ENCODE measurements at regions of chr6 and their contacts with region 1.

Region 1: GRCh38 chr6:144095331-144096002 is at the start of gene SF3B5:
- DNase-seq: peak; percentile 97
- H3K4me3 Mint-ChIP-seq: peak within 1 kb of the TSS; percentile 93
- H3K27ac Mint-ChIP-seq: peak within 1 kb of the TSS; percentile 92
- H3K4me1 Mint-ChIP-seq: peaks cover 21% of the 10 kb centered on the region
- H3K27me3 Mint-ChIP-seq: no peaks in the 10 kb centered on the region
- total RNA-seq, gene SF3B5: 207 and 208 TPM in 2 replicates

Region 2: DNA sequence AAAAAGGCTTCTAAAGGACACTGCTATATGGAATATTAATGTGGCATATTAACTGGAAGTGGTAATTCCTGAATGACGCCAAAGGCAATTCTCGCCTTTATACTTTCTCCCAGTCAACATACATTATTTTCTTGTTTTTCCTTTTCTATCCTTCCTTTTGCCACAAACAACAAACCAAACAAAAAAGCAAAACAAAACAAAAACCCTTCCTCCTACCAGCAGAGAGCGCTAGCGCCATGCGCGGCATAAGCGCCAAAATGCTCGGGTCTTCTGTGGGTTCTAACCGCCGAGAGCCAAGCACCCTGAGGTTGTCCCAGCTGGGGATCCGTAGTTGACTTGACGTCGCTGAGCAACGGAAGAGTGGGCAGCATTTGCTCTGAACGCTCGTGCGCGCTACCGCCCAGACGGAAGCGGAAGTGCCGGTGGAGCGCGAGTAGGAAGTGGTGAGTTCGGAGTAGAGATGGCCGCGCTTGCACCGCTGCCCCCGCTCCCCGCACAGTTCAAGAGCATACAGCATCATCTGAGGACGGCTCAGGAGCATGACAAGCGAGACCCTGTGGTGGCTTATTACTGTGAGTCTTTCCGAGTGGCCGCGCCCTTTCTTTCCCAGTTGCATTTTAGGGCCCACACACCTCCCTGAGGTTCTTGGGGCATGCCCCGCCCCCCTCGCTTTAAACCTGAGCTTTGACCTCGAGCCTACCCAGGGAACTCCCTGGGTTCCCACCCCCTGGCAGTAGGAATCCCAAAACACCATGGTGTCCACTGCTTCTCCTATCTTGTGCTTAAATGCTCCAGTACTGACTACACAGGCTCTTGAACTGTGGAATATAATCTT is 1948.4 kb before region 1 on chr6 and contains the starts of genes NMBR and VTA1:
- intact Hi-C with region 1: loop called (anchors 10 kb)
- DNase-seq: peak; percentile 95
- H3K4me3 Mint-ChIP-seq: peak within 1 kb of the TSS; percentile 91
- H3K27ac Mint-ChIP-seq: peak within 1 kb of the TSS; percentile 59
- H3K4me1 Mint-ChIP-seq: peaks cover 31% of the 10 kb centered on the region
- H3K27me3 Mint-ChIP-seq: no peaks in the 10 kb centered on the region
- total RNA-seq, gene NMBR: not detected in 2 replicates
- total RNA-seq, gene VTA1: 49.5 and 49.9 TPM in 2 replicates

Region 3: DNA sequence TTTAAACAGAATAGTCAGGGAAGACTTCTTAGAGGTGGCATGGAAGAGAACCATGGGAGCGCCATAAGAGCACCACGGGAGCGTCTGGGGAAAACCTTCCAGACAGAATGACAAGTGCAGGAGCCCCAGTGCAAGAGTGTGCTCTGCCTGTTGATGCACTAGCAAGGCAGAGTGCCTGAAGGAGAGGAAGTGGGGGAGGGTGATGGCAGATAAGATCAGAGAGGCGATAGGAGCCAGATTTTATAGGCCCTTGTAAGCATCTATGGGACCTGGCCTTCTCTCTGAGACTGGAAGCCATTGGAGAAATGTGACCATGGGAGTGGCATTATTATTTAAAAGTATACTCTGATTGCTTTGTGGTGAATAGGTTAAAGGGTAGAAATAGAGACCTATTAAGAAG is 597.0 kb before region 1 on chr6:
- intact Hi-C with region 1: no loop called
- DNase-seq: no peak
- H3K4me3 Mint-ChIP-seq: no peak overlapping the region
- H3K27ac Mint-ChIP-seq: no peak overlapping the region
- H3K4me1 Mint-ChIP-seq: peaks cover 16% of the 10 kb centered on the region
- H3K27me3 Mint-ChIP-seq: no peaks in the 10 kb centered on the region

Region 4: DNA sequence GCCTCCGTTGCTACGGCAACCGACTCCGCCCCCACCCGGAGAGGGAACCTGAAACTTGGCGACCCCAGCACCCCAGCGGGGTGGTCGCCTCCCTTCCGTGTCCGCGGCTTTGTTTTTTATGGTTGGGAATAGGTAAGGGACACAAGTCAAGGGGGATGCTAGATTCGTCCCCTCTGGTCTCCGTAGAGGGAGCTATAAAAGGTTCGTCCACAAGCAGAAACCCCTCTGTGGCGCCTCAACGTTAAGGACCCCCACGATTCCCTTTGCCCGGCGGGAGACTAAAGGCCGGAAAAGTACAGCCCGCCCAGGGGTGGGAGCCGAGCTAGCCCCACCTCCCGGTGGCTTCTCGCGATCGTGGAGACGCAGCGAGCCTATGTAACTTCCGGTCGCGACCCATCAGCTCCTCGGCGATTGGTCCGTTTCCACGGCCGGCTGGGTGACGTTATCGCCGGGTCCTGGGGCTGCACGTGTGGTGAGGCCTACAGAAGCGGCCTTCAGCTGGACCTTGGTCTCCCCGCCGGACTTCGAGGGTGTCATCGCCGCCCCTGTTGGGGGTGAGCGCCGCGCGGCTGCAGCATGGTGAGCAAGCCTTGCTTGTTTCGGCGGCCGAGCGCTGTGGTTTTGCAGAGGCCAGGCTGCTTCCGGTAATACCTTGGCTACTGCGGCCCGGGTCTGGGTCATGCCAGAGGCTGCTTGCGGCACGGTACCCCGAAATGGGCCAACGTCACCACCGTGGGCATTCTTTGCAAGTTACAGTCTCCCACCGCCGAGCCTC is 252.4 kb before region 1 on chr6 and contains the start of gene LTV1:
- intact Hi-C with region 1: loop called (anchors 1 kb)
- DNase-seq: peak; percentile 90
- H3K4me3 Mint-ChIP-seq: peak within 1 kb of the TSS; percentile 97
- H3K27ac Mint-ChIP-seq: peak within 1 kb of the TSS; percentile 96
- H3K4me1 Mint-ChIP-seq: peaks cover 17% of the 10 kb centered on the region
- H3K27me3 Mint-ChIP-seq: no peaks in the 10 kb centered on the region
- total RNA-seq, gene LTV1: 41.2 and 44.7 TPM in 2 replicates

Region 5: DNA sequence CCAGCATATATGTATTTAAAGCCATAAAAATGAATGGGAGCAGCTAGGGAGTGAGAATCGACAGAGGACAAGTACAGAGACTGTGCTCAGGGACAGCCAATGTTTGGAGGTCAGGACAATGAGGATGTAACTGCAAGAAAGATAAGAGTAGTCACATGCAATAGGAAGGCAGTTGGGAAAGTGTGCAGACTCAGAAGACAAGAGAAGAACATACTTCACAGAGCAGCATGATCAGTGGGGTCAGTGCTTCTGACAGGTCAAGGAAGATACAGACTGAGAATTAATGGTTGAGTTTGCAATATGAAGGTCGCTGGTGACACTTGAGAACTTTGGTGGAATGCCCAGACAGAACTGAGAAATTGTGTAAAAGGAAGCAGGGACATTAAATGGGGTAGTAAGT is 112.5 kb before region 1 on chr6:
- intact Hi-C with region 1: no loop called
- DNase-seq: no peak
- H3K4me3 Mint-ChIP-seq: no peak overlapping the region
- H3K27ac Mint-ChIP-seq: no peak overlapping the region
- H3K4me1 Mint-ChIP-seq: no peaks in the 10 kb centered on the region
- H3K27me3 Mint-ChIP-seq: peaks cover 6% of the 10 kb centered on the region

Region 6: GRCh38 chr6:144063744-144064401 is 31.6 kb before region 1 on chr6:
- intact Hi-C with region 1: loop called (anchors 1 kb)
- DNase-seq: peak; percentile 89
- H3K4me3 Mint-ChIP-seq: peak overlapping the region; percentile 87
- H3K27ac Mint-ChIP-seq: peak overlapping the region; percentile 89
- H3K4me1 Mint-ChIP-seq: peaks cover 43% of the 10 kb centered on the region
- H3K27me3 Mint-ChIP-seq: no peaks in the 10 kb centered on the region

Region 7: DNA sequence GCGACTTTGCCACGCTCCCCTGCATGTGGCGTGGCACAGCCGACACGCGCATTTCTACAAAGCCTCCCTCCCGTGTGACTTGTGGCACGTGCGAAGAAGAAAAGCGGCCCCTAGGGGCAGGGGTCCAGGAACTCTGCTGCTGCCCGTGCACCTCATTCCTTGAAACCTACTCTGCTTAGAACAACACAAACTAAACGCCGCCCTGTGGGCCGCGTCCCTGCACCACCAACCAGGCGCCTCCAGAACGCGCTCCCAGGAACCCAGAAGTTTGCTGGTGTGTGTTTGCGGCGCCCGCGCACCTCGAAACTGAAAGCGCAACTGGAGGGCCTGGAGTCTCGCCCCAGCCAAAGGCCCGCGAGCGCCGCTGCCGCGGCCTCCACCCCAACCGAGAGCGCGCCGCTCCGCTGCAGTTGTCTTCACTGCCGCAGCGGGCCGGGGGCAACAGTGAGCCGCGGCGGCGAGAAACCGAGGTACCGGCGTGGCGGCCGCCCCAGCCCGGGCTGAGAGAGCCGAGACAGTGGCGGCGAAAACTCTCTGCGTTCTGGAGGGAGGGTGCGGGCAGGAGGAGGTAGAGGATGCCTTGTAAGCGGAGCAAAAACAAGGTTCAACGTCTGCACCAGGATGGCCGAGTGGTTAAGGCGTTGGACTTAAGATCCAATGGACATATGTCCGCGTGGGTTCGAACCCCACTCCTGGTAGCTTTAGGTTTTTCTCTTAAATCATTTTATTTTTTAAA is 120.6 kb after region 1 on chr6:
- intact Hi-C with region 1: loop called (anchors 1 kb)
- DNase-seq: peak; percentile 90
- H3K4me3 Mint-ChIP-seq: peak overlapping the region; percentile 89
- H3K27ac Mint-ChIP-seq: peak overlapping the region; percentile 98
- H3K4me1 Mint-ChIP-seq: peaks cover 28% of the 10 kb centered on the region
- H3K27me3 Mint-ChIP-seq: peaks cover under 1% of the 10 kb centered on the region

Region 8: GRCh38 chr6:144559865-144560593 is 464.6 kb after region 1 on chr6:
- intact Hi-C with region 1: loop called (anchors 10 kb)
- DNase-seq: peak; percentile 56
- H3K4me3 Mint-ChIP-seq: peak overlapping the region; percentile 60
- H3K27ac Mint-ChIP-seq: peak overlapping the region; percentile 86
- H3K4me1 Mint-ChIP-seq: peaks cover 36% of the 10 kb centered on the region
- H3K27me3 Mint-ChIP-seq: no peaks in the 10 kb centered on the region